MCF 10A (cell line): ENCODE measurements at regions of chr10 and their contacts with region 1.

Region 1: GRCh38 chr10:42782446-42783180 is at the start of gene BMS1:
- DNase-seq: peak; percentile 94
- H3K4me3 Mint-ChIP-seq: peak within 1 kb of the TSS; percentile 89
- H3K27ac Mint-ChIP-seq: peak within 1 kb of the TSS; percentile 90
- H3K4me1 Mint-ChIP-seq: peaks cover 5% of the 10 kb centered on the region
- H3K27me3 Mint-ChIP-seq: no peaks in the 10 kb centered on the region
- CTCF ChIP-seq: no peak
- total RNA-seq, gene BMS1: 26.9 and 28.1 TPM in 2 replicates

Region 2: DNA sequence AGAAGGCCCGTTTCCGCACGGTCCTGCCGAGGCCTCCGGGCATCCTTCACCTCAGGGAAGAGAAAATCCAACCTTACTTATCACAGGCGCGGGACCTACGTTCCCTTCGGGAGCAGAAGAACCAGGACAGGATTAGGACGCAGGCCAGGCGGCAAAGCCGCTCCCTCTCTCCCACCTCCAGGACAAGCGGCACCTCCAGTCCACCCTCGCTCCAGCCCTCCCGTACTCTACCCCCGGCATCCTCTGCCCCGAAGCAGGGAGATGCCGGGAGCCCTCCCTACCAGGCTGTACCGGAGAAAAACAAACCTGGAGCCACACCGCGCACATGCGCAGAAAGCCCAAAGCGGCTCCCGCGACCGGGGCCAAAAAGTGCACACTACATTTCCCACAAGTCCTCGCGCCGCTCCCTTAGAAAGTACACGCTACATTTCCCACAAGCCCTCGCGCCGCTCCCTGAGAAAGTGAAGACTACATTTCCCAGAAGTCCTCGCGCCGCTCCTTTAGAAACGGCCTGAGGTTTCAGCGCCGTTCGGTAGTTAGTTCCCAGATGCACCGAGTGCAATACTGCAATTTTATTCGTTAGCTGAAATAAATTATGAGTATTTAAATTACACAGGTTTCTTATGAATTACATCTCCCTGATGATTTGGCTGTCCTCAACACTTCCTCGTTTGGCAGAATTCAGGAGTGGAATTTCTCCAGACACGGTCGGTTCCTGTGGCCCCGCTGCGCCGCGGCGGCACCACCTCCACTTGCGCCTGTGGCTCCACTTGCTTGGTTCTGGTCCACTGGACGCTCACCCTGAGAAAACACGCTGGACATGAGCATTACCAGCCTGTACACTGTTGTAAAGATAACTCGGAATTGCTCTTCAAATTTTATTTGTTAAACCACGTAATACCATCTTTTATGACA is 229.9 kb before region 1 on chr10:
- CTCF ChIA-PET with region 1: no interaction called
- POLR2A ChIA-PET with region 1: interaction called, 13 read pairs
- intact Hi-C with region 1: loop called (anchors 5 kb)
- DNase-seq: peak; percentile 98
- H3K4me3 Mint-ChIP-seq: peak overlapping the region; percentile 96
- H3K27ac Mint-ChIP-seq: peak overlapping the region; percentile 93
- H3K4me1 Mint-ChIP-seq: peaks cover 18% of the 10 kb centered on the region
- H3K27me3 Mint-ChIP-seq: no peaks in the 10 kb centered on the region
- CTCF ChIP-seq: no peak

Region 3: DNA sequence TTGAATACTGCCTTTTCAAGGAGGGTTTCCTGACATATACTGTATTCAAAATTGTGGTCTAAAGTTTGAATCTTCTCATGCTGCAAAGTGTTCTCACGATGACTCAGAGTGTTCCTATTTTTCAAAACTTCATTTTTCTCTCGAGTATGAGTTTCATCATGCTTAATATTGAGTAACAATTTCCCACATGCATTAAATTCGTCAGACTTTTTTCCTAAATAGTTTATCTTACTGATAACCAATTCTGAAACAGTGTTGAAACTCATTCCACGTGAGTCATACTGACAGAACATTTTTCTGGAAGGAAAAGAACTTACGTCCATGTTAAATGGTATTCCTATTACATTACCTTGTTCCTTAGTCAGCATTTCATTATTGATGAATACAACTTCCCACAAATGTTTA is 188.4 kb before region 1 on chr10:
- CTCF ChIA-PET with region 1: interaction called, 4 read pairs
- POLR2A ChIA-PET with region 1: interaction called, 11 read pairs
- intact Hi-C with region 1: no loop called
- DNase-seq: peak; percentile 65
- H3K4me3 Mint-ChIP-seq: peak overlapping the region; percentile 22
- H3K27ac Mint-ChIP-seq: peak overlapping the region; percentile 75
- H3K4me1 Mint-ChIP-seq: peaks cover 18% of the 10 kb centered on the region
- H3K27me3 Mint-ChIP-seq: no peaks in the 10 kb centered on the region
- CTCF ChIP-seq: no peak

Region 4: DNA sequence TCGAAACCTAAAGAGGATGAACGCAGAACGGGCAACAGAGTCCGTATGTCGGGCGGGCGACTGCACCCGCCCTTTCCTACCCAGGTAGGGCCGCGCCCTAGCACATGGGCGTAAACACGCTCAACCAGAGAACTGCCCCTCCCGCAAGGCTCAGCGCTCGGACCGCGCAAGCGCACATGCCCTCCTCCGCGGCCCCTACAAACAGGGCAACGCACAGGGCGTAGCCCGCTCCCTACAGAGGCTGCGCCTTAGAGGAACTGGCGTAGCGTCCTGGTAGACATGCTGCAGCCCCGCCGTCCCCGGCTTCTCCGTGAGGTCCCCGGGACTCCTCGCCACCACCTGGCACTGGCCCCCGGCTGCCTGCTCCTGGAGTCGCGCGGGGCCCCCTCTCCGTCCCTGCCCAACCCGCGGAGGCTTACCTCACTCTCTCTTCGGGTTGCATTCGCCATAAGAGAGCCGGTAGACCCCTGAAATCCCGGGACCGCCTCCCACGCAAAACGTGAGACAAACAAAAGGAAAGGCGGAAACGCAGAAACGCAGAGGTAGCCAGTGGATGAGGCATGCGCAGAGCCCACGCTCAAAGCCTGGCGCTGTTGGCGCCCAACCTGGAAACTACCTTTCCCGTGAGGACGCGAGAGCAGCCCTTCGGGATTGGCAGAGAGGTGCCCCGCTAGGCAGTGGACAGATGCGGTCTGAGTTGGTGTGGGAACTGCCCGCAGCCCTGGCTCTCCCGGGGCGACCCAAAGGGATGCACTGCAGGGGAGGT is 144.4 kb before region 1 on chr10 and contains the start of gene ZNF33B:
- CTCF ChIA-PET with region 1: interaction called, 3 read pairs
- POLR2A ChIA-PET with region 1: interaction called, 77 read pairs
- intact Hi-C with region 1: loop called (anchors 1 kb)
- DNase-seq: peak; percentile 96
- H3K4me3 Mint-ChIP-seq: peak within 1 kb of the TSS; percentile 87
- H3K27ac Mint-ChIP-seq: peak within 1 kb of the TSS; percentile 97
- H3K4me1 Mint-ChIP-seq: peaks cover 23% of the 10 kb centered on the region
- H3K27me3 Mint-ChIP-seq: no peaks in the 10 kb centered on the region
- CTCF ChIP-seq: no peak
- total RNA-seq, gene ZNF33B: 14.6 and 18.7 TPM in 2 replicates

Region 5: GRCh38 chr10:42646663-42647640 is 135.7 kb before region 1 on chr10:
- CTCF ChIA-PET with region 1: no interaction called
- POLR2A ChIA-PET with region 1: interaction called, 77 read pairs
- intact Hi-C with region 1: no loop called
- DNase-seq: no peak
- H3K4me3 Mint-ChIP-seq: no peak overlapping the region
- H3K27ac Mint-ChIP-seq: no peak overlapping the region
- H3K4me1 Mint-ChIP-seq: peaks cover 5% of the 10 kb centered on the region
- H3K27me3 Mint-ChIP-seq: no peaks in the 10 kb centered on the region
- CTCF ChIP-seq: no peak

Region 6: DNA sequence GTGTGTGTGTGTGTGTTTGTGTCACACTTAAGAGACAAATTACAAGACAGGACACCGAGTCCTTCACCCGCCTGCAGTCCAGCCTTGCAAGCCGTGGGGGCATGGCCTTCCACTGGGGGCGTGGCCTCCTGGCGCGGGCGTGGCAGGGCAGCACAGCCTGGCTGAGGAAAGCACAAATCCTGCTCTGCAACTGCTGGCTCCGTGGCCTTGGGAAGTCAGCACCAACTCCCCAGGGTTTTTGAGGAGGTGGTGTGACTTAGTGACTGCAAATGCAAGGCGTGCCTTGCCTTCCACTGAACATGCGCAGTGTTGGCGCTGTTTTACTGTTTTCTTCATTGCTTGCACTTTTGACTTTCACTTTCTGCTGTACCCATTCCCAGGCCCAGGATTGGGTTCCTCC is 13.0 kb before region 1 on chr10:
- CTCF ChIA-PET with region 1: interaction called, 3 read pairs
- POLR2A ChIA-PET with region 1: interaction called, 12 read pairs
- intact Hi-C with region 1: no loop called
- DNase-seq: no peak
- H3K4me3 Mint-ChIP-seq: no peak overlapping the region
- H3K27ac Mint-ChIP-seq: no peak overlapping the region
- H3K4me1 Mint-ChIP-seq: no peaks in the 10 kb centered on the region
- H3K27me3 Mint-ChIP-seq: no peaks in the 10 kb centered on the region
- CTCF ChIP-seq: no peak

Region 7: DNA sequence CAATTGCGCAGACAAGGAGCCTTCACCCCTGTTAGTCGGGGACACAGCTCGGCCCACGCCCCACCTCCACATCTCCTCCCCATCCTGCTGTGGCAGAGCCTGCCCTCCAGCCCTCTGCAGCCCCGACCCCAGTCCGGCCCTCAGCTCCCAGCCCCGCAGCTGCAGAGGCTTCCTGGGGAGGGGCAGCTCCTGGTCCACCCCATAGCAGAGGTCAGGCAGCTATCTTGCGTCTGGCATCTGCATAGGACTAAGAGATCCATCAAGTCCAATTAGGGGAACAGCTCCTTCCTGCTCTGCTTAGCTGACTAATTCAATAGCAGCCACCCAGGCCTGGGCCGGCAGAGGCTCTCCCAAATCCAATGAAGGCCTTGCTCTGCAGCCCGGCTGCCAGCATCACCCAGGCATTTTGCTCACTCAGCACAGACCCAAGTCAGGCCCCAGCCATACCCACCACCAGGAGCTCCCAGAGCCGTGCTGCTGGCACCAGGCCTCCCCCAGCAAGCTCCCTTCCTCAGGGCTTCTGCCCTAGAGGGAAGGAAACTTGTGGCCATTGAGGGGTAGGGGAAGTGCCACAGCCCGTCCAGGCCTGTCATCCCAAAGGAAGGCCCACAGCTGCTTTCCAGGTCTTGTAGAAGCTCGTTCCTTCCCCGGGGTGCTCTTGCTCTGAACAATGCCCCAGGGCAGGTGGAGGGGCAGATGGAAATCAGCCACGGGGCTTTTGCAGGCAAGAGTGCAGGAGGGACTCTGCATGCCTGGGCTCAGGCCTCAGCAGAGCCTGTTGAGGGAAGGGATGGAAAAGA is 188.0 kb after region 1 on chr10:
- CTCF ChIA-PET with region 1: no interaction called
- POLR2A ChIA-PET with region 1: no interaction called
- intact Hi-C with region 1: no loop called
- DNase-seq: no peak
- H3K4me3 Mint-ChIP-seq: no peak overlapping the region
- H3K27ac Mint-ChIP-seq: no peak overlapping the region
- H3K4me1 Mint-ChIP-seq: no peaks in the 10 kb centered on the region
- H3K27me3 Mint-ChIP-seq: no peaks in the 10 kb centered on the region
- CTCF ChIP-seq: no peak